ENCODE measurements at regions of chr1 and their contacts with region 1.

Region 1: GRCh38 chr1:166875734-166876539 is at the start of gene TADA1:
- DNase-seq: peak; percentile 94 to 95
- H3K4me3 ChIP-seq: peak within 1 kb of the TSS; percentile 70 to 87 (median 82)
- H3K27ac ChIP-seq: peak within 1 kb of the TSS; percentile 92
- H3K4me1 ChIP-seq: peaks cover 0 to 5% (median 0%) of the 10 kb centered on the region in 4 experiments; a peak in 2 of 7 replicates
- H3K27me3 ChIP-seq: no peaks in the 10 kb centered on the region
- CTCF ChIP-seq: peak; percentile 11 to 27 (median 18)
- EP300 ChIP-seq: peak in 1 of 2 experiments; percentile 11; a peak in 1 of 3 replicates
- POLR2A ChIP-seq: peak; percentile 56 to 87
- RAD21 ChIP-seq: peak in 1 of 2 experiments; percentile 15; a peak in 1 of 4 replicates
- total RNA-seq, gene TADA1: 21.1 and 24.5 TPM in 2 replicates

Region 2: DNA sequence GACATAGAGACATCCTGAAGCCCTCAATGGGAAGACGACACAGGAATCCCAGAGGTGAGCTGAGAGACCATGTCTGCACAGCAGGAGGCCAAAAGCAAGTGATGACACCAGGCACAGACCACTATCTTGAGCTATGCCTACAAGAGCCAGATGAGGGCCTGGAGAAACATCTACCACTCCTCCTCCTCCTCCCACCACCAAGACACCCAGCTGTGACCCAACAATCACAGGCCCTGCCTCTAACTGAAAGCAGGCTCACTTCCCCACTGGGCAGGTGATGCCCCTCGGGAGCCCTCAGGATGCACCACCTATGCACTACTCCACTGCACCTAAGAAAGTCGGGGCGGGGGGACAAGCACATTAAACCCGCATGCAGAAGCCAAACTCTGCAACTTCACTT is 16.3 kb before region 1 on chr1:
- CTCF ChIA-PET with region 1: interaction called, 4 read pairs
- POLR2A ChIA-PET with region 1: interaction called, 10 read pairs
- DNase-seq: no peak
- H3K4me3 ChIP-seq: no peak overlapping the region
- H3K27ac ChIP-seq: no peak overlapping the region
- H3K4me1 ChIP-seq: peaks cover 3 to 15% (median 10%) of the 10 kb centered on the region in 4 experiments
- H3K27me3 ChIP-seq: no peaks in the 10 kb centered on the region
- CTCF ChIP-seq: no peak
- EP300 ChIP-seq: no peak
- POLR2A ChIP-seq: no peak
- RAD21 ChIP-seq: no peak

Region 3: GRCh38 chr1:167003711-167004110 is 127.8 kb after region 1 on chr1:
- CTCF ChIA-PET with region 1: no interaction called
- POLR2A ChIA-PET with region 1: no interaction called
- DNase-seq: no peak
- H3K4me3 ChIP-seq: no peak overlapping the region
- H3K27ac ChIP-seq: no peak overlapping the region
- H3K4me1 ChIP-seq: no peaks in the 10 kb centered on the region
- H3K27me3 ChIP-seq: no peaks in the 10 kb centered on the region
- CTCF ChIP-seq: no peak
- EP300 ChIP-seq: no peak
- POLR2A ChIP-seq: no peak
- RAD21 ChIP-seq: no peak